ENCODE measurements at regions of chr22 and their contacts with region 1.

Region 1: GRCh38 chr22:33756508-33756949 is 163.7 kb downstream of the LARGE1 start:
- DNase-seq: no peak
- H3K4me3 ChIP-seq: no peak overlapping the region
- CTCF ChIP-seq: no peak

Region 2: GRCh38 chr22:33723915-33724314 is 32.6 kb before region 1 on chr22:
- in situ Hi-C with region 1: loop called (anchors 5 kb)
- DNase-seq: no peak
- H3K4me3 ChIP-seq: no peak overlapping the region
- CTCF ChIP-seq: no peak